ENCODE measurements at regions of chr3 and their contacts with region 1.

Region 1: GRCh38 chr3:134212906-134213665 is 37.6 kb downstream of the RYK start:
- DNase-seq: peak; percentile 73 to 84 (median 76)
- ATAC-seq: peak; percentile 91 to 95 (median 94)
- H3K4me3 ChIP-seq: no peak overlapping the region
- H3K27ac ChIP-seq: no peak overlapping the region
- H3K4me1 ChIP-seq: no peaks in the 10 kb centered on the region
- H3K27me3 ChIP-seq: no peaks in the 10 kb centered on the region
- CTCF ChIP-seq: peak; percentile 88 to 98 (median 96)
- POLR2A ChIP-seq: no peak

Region 2: DNA sequence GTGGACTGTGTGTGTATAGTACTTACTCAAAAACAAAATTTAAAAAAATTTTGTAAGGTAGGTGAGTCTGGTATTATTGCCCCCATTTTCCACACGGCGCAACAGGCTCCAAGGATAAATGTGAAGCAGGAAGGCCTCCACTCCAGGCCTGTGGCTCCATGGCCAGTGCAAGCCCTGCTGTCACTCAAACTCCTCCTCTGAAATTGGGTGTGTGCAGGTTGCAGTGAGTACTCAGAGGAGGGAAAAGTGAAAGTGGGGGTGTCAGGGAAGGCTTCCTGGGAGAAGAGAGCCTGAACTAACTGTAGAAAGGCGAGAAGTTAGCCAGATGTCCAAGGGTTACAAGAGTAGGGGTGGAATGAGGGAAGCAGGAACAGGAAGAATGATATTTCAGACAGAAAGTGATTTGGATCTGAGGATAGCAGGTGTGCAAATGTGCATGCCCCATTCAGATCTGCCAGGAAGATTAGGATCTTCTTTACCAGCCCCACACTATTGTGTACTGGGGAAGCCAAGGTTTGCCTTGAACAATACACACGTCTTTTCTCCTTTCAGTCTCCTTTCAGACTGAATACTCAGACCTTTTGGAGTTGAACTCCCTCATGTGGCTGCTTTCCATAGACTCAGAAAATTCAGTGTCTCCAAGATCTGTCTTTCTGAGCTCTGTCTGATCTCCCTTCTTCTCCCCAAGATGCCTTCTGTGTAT is 86.2 kb after region 1 on chr3:
- intact Hi-C with region 1: loop called (anchors 2 to 10 kb)
- DNase-seq: no peak
- ATAC-seq: peak; percentile 53 to 75 (median 58)
- H3K4me3 ChIP-seq: no peak overlapping the region
- H3K27ac ChIP-seq: no peak overlapping the region
- H3K4me1 ChIP-seq: no peaks in the 10 kb centered on the region
- H3K27me3 ChIP-seq: no peaks in the 10 kb centered on the region
- CTCF ChIP-seq: peak; percentile 23 to 44 (median 28)
- POLR2A ChIP-seq: no peak